ENCODE measurements at regions of chr1 and their contacts with region 1.

Region 1: DNA sequence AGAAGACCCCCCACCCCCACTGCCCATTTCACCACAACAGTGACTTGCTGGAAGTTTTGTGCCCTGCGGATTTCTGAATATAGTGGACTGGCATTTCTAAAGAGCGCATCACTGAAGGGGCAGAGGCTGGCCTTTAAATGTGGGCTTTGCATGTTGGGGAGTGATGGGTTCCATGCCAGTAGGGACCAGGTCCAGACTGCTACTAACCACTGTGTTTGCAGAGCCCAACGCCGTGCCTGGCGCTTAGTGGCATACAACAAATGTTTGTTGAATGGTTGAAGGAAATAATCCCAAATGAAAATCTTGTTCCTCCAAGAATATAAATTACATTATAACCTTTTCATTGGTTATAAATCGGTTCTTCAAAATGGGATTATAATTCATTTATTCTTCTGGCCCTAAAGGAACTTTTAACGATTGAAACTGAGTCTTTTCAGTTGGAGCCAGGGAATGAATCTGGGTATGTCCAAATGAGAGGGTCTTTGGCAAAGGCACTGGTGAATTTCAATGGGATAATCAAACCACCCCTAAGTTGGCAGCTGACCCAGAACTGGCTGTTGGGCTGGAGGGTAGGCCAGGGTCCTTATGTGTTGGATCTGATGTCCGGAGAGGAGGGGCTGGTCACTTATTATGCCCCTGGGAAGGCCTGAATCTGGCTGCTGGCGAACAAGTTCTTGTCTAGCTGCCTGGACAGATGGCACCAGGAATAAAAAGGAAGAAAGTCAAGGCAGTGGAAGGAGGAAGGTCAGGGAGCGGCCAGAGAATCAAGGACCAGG is 13.8 kb upstream of the SDHB start:
- DNase-seq: no peak
- ATAC-seq: no peak
- H3K4me3 ChIP-seq: no peak overlapping the region
- H3K27ac ChIP-seq: peak overlapping the region; percentile 44
- H3K4me1 ChIP-seq: peaks cover 30% of the 10 kb centered on the region
- H3K27me3 ChIP-seq: no peaks in the 10 kb centered on the region
- CTCF ChIP-seq: no peak

Region 2: DNA sequence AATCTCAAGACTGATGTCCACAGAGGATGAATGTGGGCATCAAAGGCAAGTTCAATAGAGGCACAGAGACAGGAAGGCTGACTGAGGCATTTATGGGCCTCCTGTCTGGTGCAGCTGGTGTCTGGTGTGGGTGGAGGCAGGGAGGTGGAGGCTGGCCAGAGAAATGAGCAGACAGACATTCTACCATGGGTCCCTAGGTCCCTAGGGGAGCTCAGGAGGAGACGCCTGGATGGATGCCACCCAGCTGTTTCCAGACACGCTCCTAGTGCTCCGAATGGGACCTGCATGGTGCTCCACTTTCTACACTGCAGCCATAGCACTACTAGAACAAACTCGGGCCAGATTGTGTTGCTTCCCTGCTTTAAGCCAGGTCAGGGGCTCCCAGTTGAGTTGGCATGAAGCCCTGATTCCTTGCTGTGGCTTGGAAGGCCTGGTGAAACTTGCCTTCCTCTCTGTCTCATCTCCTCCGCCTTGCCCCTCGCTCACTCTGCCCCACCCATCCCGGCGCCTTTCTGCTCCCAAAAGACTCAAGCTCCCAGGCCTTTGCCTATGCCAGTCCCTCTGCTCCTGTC is 26.3 kb after region 1 on chr1:
- intact Hi-C with region 1: loop called in 1 of 2 experiments (anchors 2 kb)
- DNase-seq: no peak
- ATAC-seq: peak in 2 of 4 donors; percentile 11 to 19
- H3K4me3 ChIP-seq: no peak overlapping the region
- H3K27ac ChIP-seq: peak overlapping the region; percentile 60
- H3K4me1 ChIP-seq: peaks cover 54% of the 10 kb centered on the region
- H3K27me3 ChIP-seq: no peaks in the 10 kb centered on the region
- CTCF ChIP-seq: no peak

Measured in psoas muscle (tissue), 8 donors.